Heart right ventricle (tissue), 16 donors: ENCODE measurements at regions of chr18 and their contacts with region 1.

Region 1: DNA sequence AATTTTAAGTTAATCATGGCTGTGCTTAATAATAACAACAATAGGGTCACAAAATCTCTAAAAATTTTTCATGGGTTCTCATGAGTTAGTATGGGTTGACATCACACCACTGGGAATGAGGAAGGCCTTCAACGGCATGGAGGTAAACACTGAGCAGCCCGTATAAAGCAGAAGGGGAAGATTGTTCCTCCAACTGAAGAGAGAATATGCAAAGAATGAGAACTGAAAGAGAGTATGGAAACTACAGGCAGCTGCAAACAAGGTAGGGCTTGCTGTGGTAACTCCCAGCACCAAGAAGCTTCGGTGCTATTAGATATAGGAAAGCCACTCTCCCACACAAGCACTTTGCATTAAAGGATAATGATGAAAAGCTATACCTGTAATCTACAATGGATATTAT is 1242.3 kb upstream of the CELF4 start:
- DNase-seq: no peak
- ATAC-seq: no peak
- H3K4me3 ChIP-seq: no peak overlapping the region
- H3K27ac ChIP-seq: no peak overlapping the region
- H3K4me1 ChIP-seq: no peaks in the 10 kb centered on the region
- H3K27me3 ChIP-seq: no peaks in the 10 kb centered on the region
- CTCF ChIP-seq: no peak

Region 2: GRCh38 chr18:40292985-40293710 is 1485.2 kb after region 1 on chr18:
- intact Hi-C with region 1: loop called in 1 of 10 experiments (anchors 5 kb)
- DNase-seq: no peak
- ATAC-seq: no peak
- H3K4me3 ChIP-seq: no peak overlapping the region
- H3K27ac ChIP-seq: no peak overlapping the region
- H3K4me1 ChIP-seq: no peaks in the 10 kb centered on the region
- H3K27me3 ChIP-seq: no peaks in the 10 kb centered on the region
- CTCF ChIP-seq: peak in 4 of 9 donors; percentile 24 to 40 (median 32)